Activated T-helper 1 cell treated with anti-CD3 and anti-CD28 coated beads, Interleukin-12 subunit alpha, Interleukin-12 subunit beta, Interleukin-2, Interleukin-4 antibody, amounts not matched to agents 30 ng/mL and 10 ng/mL and 1 ng/mL, durations not matched to agents 14 hours and 24 hours and 36 hours (primary cell): ENCODE measurements at regions of chr7 and their contacts with region 1.

Region 1: DNA sequence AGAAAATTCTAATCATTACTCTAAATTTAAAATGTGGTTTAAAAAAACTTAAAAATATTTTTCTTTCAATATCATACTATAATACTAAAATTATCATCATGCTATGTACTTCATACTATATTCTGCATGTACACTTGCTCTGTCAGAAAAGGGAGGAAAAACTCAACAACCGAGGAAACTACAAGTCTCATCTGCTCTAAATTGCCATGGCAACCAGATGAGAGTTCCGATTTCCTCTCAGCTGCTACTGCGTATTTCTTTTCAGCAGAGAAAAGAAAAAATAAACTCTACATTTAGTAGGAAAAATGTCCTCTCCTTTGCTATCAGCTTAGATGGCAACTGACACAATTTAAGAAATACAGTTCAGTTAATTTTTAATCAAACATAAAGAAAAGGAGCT is 178.9 kb downstream of the SRPK2 start:
- DNase-seq: no peak
- H3K4me3 Mint-ChIP-seq: no peak overlapping the region
- H3K27ac Mint-ChIP-seq: no peak overlapping the region
- H3K4me1 Mint-ChIP-seq: peaks cover 58% of the 10 kb centered on the region
- H3K27me3 Mint-ChIP-seq: no peaks in the 10 kb centered on the region

Region 2: DNA sequence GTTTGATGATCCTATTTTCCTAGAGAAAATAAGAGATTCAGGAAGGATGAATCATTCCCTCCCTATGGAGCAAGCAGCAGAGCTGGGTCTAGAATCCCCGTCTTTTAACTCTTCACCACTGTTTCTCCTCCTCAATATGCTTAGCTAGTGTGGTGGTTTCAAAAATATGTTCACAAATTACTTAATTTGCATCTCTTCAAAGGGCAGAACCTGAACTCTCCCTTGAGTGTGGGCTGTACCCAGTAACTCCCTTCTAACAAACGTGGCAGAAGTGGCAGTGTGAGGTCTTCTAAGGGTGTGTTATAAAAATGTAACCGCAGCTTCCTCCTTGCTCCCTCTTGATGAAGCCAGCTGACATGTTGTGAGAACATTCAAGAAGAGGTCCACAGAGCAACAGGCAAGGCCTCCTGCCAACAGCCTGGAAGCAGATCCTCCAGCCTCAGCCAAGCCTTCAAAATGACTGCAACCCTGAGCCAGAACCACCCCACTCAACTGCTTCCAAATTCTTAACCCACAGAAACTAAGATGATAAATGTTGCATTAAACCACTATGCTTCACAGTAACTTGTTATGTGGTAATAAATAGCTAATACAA is 142.2 kb after region 1 on chr7:
- intact Hi-C with region 1: loop called (anchors 5 kb)
- DNase-seq: peak; percentile 50
- H3K4me3 Mint-ChIP-seq: peak overlapping the region; percentile 52
- H3K27ac Mint-ChIP-seq: peak overlapping the region; percentile 87
- H3K4me1 Mint-ChIP-seq: peaks cover 46% of the 10 kb centered on the region
- H3K27me3 Mint-ChIP-seq: no peaks in the 10 kb centered on the region